Calu3 (cell line): ENCODE measurements at regions of chr6 and their contacts with region 1.

Region 1: GRCh38 chr6:25717866-25718740 is 36.4 kb upstream of the SLC17A4 start:
- DNase-seq: peak; percentile 59
- H3K4me3 Mint-ChIP-seq: no peak overlapping the region
- H3K27ac Mint-ChIP-seq: no peak overlapping the region
- H3K4me1 Mint-ChIP-seq: peaks cover 9% of the 10 kb centered on the region
- H3K27me3 Mint-ChIP-seq: peaks cover 12% of the 10 kb centered on the region
- CTCF ChIP-seq: peak; percentile 72

Region 2: DNA sequence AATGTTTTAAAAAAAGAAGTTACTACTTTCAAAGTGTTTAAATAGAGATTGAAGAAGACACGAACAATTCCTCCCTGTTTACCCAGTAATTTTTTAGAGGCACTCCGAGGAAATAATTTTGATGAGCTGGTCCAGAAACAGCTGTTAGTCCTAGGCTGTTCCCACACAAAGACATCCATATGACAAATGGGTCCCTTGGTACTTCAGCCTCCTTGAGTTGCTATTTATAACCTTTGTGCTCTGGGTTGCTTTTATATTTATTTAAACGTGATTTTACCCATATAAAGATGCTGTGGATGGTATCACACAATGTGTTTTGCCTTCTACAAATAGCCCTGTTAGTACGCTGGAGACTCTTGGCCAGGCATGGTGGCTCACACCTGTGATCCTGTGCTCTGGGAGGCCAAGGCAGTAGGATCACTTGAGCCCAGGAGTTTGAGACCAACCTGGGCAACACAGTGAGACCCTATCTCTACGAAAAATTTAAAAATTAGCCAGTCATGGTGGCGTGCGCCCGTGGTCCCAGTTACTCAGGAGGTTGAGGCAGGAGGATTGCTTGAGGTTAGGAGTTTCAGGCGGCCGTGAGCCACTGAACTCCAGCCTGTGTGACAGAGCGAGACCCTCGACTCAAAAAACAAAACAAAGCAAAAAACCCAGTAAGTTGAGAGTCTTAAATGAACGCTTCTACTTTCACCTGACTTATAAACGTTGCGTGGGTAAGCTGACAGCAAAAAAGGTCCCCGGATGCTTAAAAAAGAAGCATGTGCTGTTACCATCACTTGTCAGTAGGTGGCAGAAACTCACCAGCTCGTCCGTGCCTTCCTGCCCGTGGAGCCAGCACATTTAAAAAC is 862.5 kb before region 1 on chr6:
- CTCF ChIA-PET with region 1: no interaction called
- intact Hi-C with region 1: no loop called
- DNase-seq: peak; percentile 81
- H3K4me3 Mint-ChIP-seq: no peak overlapping the region
- H3K27ac Mint-ChIP-seq: no peak overlapping the region
- H3K4me1 Mint-ChIP-seq: peaks cover 29% of the 10 kb centered on the region
- H3K27me3 Mint-ChIP-seq: no peaks in the 10 kb centered on the region
- CTCF ChIP-seq: peak; percentile 94

Region 3: GRCh38 chr6:25070547-25071366 is 647.3 kb before region 1 on chr6:
- CTCF ChIA-PET with region 1: no interaction called
- intact Hi-C with region 1: no loop called
- DNase-seq: peak; percentile 94
- H3K4me3 Mint-ChIP-seq: no peak overlapping the region
- H3K27ac Mint-ChIP-seq: no peak overlapping the region
- H3K4me1 Mint-ChIP-seq: no peaks in the 10 kb centered on the region
- H3K27me3 Mint-ChIP-seq: peaks cover 27% of the 10 kb centered on the region
- CTCF ChIP-seq: peak; percentile 100

Region 4: GRCh38 chr6:25601800-25602673 is 116.1 kb before region 1 on chr6:
- CTCF ChIA-PET with region 1: interaction called, 3 read pairs
- intact Hi-C with region 1: loop called (anchors 5 kb)
- DNase-seq: no peak
- H3K4me3 Mint-ChIP-seq: no peak overlapping the region
- H3K27ac Mint-ChIP-seq: peak overlapping the region; percentile 13
- H3K4me1 Mint-ChIP-seq: peaks cover 17% of the 10 kb centered on the region
- H3K27me3 Mint-ChIP-seq: no peaks in the 10 kb centered on the region
- CTCF ChIP-seq: peak; percentile 47

Region 5: DNA sequence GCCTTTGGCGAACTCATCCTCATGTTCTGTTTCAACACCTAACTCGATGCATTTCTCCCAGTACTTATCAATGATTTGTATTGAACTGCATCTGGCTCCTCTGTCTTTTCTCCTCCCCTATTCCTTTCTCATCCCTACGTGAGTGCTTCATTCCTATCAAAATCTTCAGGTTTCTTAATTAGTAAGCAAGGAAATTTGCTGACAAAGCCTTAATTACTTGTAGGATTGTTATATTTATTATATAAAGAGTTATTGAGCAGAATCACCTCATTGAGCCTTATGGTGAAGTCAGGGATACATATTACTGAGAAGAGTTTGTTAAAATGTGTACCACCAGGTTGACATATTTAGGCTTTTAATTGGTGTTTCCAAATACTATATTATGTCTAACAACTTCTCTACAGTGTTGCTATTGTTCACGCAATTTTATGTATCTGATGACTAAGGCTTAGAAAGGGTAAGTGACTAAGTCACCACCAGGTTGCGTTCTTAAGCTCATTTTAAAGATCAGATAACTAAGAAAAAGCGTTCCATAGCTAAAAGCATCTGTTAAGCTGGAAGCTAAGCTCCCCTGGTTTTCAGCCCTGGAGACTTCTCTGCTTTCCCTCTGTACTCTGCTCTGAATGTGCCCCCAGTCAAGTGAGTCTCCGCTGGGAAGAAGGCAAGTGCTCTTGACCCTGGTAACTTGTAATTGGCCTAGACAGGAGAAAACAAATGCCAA is 47.1 kb before region 1 on chr6:
- CTCF ChIA-PET with region 1: interaction called, 46 read pairs
- intact Hi-C with region 1: loop called (anchors 5 kb)
- DNase-seq: no peak
- H3K4me3 Mint-ChIP-seq: no peak overlapping the region
- H3K27ac Mint-ChIP-seq: no peak overlapping the region
- H3K4me1 Mint-ChIP-seq: peaks cover 20% of the 10 kb centered on the region
- H3K27me3 Mint-ChIP-seq: no peaks in the 10 kb centered on the region
- CTCF ChIP-seq: no peak

Region 6: GRCh38 chr6:25764611-25765010 is 46.5 kb after region 1 on chr6:
- CTCF ChIA-PET with region 1: no interaction called
- intact Hi-C with region 1: no loop called
- DNase-seq: no peak
- H3K4me3 Mint-ChIP-seq: no peak overlapping the region
- H3K27ac Mint-ChIP-seq: no peak overlapping the region
- H3K4me1 Mint-ChIP-seq: peaks cover 4% of the 10 kb centered on the region
- H3K27me3 Mint-ChIP-seq: no peaks in the 10 kb centered on the region
- CTCF ChIP-seq: no peak

Region 7: GRCh38 chr6:25835442-25836283 is 117.6 kb after region 1 on chr6:
- CTCF ChIA-PET with region 1: interaction called, 8 read pairs
- intact Hi-C with region 1: loop called (anchors 5 kb)
- DNase-seq: no peak
- H3K4me3 Mint-ChIP-seq: no peak overlapping the region
- H3K27ac Mint-ChIP-seq: no peak overlapping the region
- H3K4me1 Mint-ChIP-seq: peaks cover 17% of the 10 kb centered on the region
- H3K27me3 Mint-ChIP-seq: peaks cover 12% of the 10 kb centered on the region
- CTCF ChIP-seq: no peak

Region 8: DNA sequence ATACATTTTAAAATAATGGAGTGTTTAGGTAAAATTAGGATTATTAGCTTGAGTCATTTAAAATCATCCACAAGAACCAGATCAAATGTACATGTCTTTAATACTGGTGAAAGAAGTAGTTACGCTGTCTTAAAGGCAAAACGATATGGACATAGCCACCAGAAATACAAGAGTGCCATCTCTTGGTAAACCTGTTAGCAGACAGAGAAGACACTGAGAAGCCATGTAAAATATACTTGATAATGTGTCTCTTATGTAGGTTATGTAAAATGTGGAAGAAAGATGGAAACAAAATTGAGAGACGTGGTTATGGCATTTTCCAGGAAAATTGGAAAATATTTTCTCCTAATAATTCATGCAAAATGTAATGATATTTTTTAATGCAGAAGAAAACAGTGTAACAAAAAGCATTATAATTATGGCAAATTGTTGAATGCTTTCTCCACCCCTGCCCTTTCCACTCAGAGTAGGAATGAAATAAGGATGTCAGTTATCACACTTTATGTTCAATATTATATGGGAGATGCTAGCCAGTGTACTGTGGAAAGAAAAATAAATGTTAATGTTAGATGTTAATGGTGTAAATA is 224.6 kb after region 1 on chr6:
- CTCF ChIA-PET with region 1: interaction called, 4 read pairs
- intact Hi-C with region 1: loop called (anchors 1 kb)
- DNase-seq: peak; percentile 35
- H3K4me3 Mint-ChIP-seq: no peak overlapping the region
- H3K27ac Mint-ChIP-seq: no peak overlapping the region
- H3K4me1 Mint-ChIP-seq: no peaks in the 10 kb centered on the region
- H3K27me3 Mint-ChIP-seq: no peaks in the 10 kb centered on the region
- CTCF ChIP-seq: peak; percentile 61